Dendritic cell treated with granulocyte-macrophage colony-stimulating factor and Interleukin-4, amounts not matched to agents 40 ng/mL and 50 ng/mL, for 4 days (primary cell): ENCODE measurements at regions of chr5 and their contacts with region 1.

Region 1: DNA sequence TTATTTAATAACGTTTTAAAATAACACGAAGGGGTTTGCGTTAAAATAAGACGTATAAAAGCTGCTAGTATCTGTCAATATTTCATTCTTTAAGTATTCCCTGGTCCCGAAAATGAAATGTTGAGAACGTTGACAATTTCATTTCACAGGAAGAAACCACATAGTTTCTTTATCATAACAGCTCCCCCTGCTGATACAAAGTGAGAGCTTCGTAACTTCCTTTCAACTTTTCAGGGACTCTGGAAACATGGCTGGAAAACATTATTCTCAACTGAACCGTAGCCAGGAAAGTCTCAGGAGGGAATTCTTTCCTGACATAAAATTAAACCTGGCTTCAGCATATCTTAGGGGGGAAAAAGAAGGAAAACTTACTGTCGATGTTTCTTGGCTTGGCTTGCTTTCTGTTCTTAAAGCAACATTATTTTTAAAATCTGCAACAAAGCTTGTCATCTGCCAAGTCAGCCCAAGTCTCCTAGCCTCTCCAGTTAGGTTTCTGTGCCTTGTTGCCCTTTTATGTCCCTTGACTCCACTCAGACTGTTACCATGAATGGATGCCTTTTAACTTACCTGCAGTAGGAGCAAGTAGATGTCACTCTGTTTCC is 122.9 kb upstream of the DAB2 start:
- H3K4me3 Mint-ChIP-seq: no peak overlapping the region
- H3K27ac Mint-ChIP-seq: no peak overlapping the region
- H3K4me1 Mint-ChIP-seq: peaks cover 7% of the 10 kb centered on the region
- H3K27me3 Mint-ChIP-seq: no peaks in the 10 kb centered on the region

Region 2: GRCh38 chr5:39498247-39498952 is 49.3 kb before region 1 on chr5:
- intact Hi-C with region 1: loop called (anchors 5 kb)
- H3K4me3 Mint-ChIP-seq: no peak overlapping the region
- H3K27ac Mint-ChIP-seq: no peak overlapping the region
- H3K4me1 Mint-ChIP-seq: peaks cover 44% of the 10 kb centered on the region
- H3K27me3 Mint-ChIP-seq: peaks cover 2% of the 10 kb centered on the region